ENCODE measurements at regions of chr7 and their contacts with region 1.

Region 1: GRCh38 chr7:121313793-121314676 is 14.8 kb upstream of the WNT16 start:
- DNase-seq: no peak
- H3K4me3 ChIP-seq: no peak overlapping the region
- H3K27ac ChIP-seq: no peak overlapping the region
- H3K4me1 ChIP-seq: peaks cover 9% of the 10 kb centered on the region
- H3K27me3 ChIP-seq: no peaks in the 10 kb centered on the region
- CTCF ChIP-seq: no peak

Region 2: DNA sequence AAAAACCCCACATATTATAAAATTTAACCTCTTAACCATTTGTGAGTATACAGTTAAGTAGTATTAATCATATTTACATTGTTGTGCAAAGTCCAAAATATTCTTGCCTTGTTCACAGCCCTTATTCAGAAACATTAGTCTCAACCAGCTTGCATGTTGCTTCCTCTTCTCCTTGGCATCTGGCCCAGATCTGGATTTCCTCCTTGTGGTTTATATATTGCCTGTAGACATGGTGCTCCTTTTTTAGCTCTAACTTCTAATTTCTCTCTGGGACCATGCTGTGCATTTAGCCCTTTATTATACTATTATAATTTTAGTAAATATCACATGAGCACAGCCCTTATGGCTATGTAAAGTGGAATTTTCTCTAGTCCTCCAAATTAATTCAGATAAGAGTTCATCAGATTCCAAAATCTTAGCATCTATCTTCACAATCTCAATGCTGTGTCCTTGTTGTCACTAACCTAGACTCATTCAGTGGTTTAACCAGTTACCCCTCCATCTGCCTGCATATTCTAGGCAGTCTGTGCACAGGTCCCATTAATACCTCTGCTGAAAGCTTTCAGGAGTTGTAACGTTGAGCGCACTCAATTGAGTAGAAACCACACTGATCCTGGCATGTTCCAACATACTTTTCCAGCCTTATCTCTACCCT is 317.6 kb before region 1 on chr7:
- CTCF ChIA-PET with region 1: no interaction called
- POLR2A ChIA-PET with region 1: interaction called, 12 read pairs
- intact Hi-C with region 1: no loop called
- DNase-seq: peak; percentile 60 to 61
- H3K4me3 ChIP-seq: no peak overlapping the region
- H3K27ac ChIP-seq: no peak overlapping the region
- H3K4me1 ChIP-seq: 0 out of 2 replicates have a peak, but pooled peaks cover 9% of the 10 kb centered on the region
- H3K27me3 ChIP-seq: no peaks in the 10 kb centered on the region
- CTCF ChIP-seq: no peak

Region 3: GRCh38 chr7:121891731-121892130 is 577.7 kb after region 1 on chr7:
- CTCF ChIA-PET with region 1: no interaction called
- POLR2A ChIA-PET with region 1: no interaction called
- intact Hi-C with region 1: no loop called
- DNase-seq: no peak
- H3K4me3 ChIP-seq: no peak overlapping the region
- H3K27ac ChIP-seq: no peak overlapping the region
- H3K4me1 ChIP-seq: no peaks in the 10 kb centered on the region
- H3K27me3 ChIP-seq: no peaks in the 10 kb centered on the region
- CTCF ChIP-seq: no peak

Measured in PC-9 (cell line).